Calu3 (cell line): ENCODE measurements at regions of chr15 and their contacts with region 1.

Region 1: DNA sequence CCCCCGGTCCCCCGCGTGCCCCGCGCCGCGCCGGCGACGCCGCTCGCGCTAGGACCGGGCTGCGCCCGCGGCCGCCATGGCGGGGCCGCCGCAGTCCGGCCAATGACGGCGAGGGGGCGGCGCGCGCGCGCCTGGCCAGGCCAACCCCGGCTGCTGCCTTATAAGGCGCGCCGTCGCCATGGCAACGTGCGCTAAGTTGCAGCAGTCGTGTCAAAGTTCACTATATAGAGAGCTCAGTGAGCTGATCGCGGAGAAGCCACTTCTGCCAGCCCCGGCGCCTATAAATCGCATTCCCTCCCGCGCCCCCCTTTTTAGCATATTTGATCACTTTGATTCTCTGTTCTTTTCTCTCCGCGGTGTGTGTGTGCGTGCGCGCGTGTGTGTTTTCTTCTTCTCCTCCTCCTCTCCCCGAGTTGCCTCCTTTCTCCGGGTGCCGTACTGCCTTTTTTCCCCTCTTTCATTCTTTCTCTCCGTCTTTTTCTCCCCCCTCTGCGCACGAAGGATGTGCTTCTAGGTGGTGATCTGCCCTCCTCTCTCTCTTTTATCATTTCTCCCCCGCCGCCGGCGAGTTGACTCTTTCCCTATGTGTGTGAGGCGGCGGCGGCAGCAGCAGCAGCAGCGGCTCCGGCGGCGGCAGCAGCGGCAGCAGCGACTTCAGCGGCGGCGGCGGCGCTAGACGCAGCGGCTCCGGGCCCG is at the start of gene NR2F2:
- DNase-seq: peak; percentile 98
- H3K4me3 Mint-ChIP-seq: no peak within 1 kb of the TSS
- H3K27ac Mint-ChIP-seq: peak within 1 kb of the TSS; percentile 98
- H3K4me1 Mint-ChIP-seq: peaks cover 22% of the 10 kb centered on the region
- H3K27me3 Mint-ChIP-seq: no peaks in the 10 kb centered on the region
- CTCF ChIP-seq: no peak
- total RNA-seq, gene NR2F2: 158 and 167 TPM in 2 replicates

Region 2: GRCh38 chr15:95259513-95259912 is 1071.1 kb before region 1 on chr15:
- CTCF ChIA-PET with region 1: interaction called, 4 read pairs
- intact Hi-C with region 1: loop called (anchors 5 kb)
- DNase-seq: peak; percentile 78
- H3K4me3 Mint-ChIP-seq: peak overlapping the region; percentile 15
- H3K27ac Mint-ChIP-seq: no peak overlapping the region
- H3K4me1 Mint-ChIP-seq: peaks cover 26% of the 10 kb centered on the region
- H3K27me3 Mint-ChIP-seq: no peaks in the 10 kb centered on the region
- CTCF ChIP-seq: peak; percentile 85

Region 3: GRCh38 chr15:95770191-95770590 is 560.4 kb before region 1 on chr15:
- CTCF ChIA-PET with region 1: no interaction called
- intact Hi-C with region 1: loop called (anchors 5 kb)
- DNase-seq: peak; percentile 69
- H3K4me3 Mint-ChIP-seq: peak overlapping the region; percentile 25
- H3K27ac Mint-ChIP-seq: peak overlapping the region; percentile 73
- H3K4me1 Mint-ChIP-seq: peaks cover 16% of the 10 kb centered on the region
- H3K27me3 Mint-ChIP-seq: no peaks in the 10 kb centered on the region
- CTCF ChIP-seq: no peak

Region 4: GRCh38 chr15:96218623-96219455 is 111.8 kb before region 1 on chr15:
- CTCF ChIA-PET with region 1: no interaction called
- intact Hi-C with region 1: no loop called
- DNase-seq: no peak
- H3K4me3 Mint-ChIP-seq: no peak overlapping the region
- H3K27ac Mint-ChIP-seq: no peak overlapping the region
- H3K4me1 Mint-ChIP-seq: peaks cover 23% of the 10 kb centered on the region
- H3K27me3 Mint-ChIP-seq: no peaks in the 10 kb centered on the region
- CTCF ChIP-seq: no peak

Region 5: DNA sequence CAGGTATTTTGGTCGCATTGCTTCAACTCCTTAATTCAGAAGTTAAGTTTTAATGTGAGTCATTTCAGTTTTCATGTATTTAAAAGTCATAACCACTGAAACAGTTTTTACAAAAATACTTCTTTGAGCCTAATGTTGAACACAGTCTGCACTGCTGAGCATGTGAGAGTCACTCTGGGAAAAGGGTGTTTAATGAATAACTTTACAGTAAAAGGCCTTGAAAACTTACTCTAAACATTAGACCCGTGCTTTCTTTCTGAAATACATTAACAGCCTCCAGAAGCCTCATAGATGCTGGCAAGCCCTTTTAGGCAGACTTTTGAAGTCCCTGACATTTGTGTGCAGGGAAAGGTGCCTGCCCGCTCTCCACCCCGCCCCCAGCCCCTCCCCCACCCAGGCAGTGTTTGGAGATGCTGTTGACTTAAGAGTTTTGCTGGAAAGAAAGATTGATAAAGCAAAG is 69.0 kb before region 1 on chr15:
- CTCF ChIA-PET with region 1: interaction called, 3 read pairs
- intact Hi-C with region 1: loop called (anchors 2 kb)
- DNase-seq: no peak
- H3K4me3 Mint-ChIP-seq: no peak overlapping the region
- H3K27ac Mint-ChIP-seq: peak overlapping the region; percentile 99
- H3K4me1 Mint-ChIP-seq: peaks cover 69% of the 10 kb centered on the region
- H3K27me3 Mint-ChIP-seq: no peaks in the 10 kb centered on the region
- CTCF ChIP-seq: no peak

Region 6: DNA sequence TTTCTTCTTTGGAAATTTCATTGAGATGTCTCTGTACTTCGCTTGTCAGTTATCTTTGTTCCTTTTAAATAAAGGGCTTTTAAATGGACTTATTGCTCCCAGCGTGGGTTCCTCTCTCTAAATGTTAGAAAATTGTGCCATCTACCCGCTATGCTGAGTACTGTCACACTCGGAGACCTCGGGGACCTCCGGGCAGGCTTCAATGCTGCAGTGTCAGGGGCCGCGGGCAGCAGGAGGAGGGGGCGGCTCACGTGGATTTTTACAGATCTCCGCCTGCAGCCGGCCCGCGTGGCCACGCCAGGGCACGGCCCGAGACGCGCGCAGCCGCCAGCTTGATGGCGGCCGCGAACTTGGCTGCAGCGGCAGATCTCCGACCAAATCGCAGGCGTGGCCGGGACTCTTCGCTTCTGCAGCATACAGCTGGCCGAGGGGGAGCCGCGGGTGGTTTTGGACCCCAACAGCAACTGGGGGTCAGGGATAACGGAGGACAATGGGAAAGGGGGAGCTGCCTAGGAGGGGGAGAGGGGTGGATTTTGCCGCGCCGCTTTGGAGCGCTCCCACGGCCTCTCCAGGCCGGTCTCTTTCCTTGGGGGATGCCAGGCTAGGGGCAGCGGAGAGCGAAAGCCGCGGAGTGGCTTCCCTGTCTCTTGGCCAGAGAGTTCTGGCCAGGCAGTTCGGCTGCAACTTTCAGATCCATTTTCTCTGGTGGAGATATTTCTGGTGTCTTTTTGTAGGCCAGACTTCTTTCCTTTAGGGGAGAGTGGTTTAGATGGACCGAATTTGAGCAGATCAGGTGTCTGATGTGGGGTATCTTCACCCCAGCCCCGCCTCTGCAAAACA is 15.2 kb after region 1 on chr15:
- CTCF ChIA-PET with region 1: interaction called, 121 read pairs
- intact Hi-C with region 1: loop called (anchors 2 kb)
- DNase-seq: peak; percentile 80
- H3K4me3 Mint-ChIP-seq: no peak overlapping the region
- H3K27ac Mint-ChIP-seq: no peak overlapping the region
- H3K4me1 Mint-ChIP-seq: peaks cover 70% of the 10 kb centered on the region
- H3K27me3 Mint-ChIP-seq: no peaks in the 10 kb centered on the region
- CTCF ChIP-seq: peak; percentile 66

Region 7: DNA sequence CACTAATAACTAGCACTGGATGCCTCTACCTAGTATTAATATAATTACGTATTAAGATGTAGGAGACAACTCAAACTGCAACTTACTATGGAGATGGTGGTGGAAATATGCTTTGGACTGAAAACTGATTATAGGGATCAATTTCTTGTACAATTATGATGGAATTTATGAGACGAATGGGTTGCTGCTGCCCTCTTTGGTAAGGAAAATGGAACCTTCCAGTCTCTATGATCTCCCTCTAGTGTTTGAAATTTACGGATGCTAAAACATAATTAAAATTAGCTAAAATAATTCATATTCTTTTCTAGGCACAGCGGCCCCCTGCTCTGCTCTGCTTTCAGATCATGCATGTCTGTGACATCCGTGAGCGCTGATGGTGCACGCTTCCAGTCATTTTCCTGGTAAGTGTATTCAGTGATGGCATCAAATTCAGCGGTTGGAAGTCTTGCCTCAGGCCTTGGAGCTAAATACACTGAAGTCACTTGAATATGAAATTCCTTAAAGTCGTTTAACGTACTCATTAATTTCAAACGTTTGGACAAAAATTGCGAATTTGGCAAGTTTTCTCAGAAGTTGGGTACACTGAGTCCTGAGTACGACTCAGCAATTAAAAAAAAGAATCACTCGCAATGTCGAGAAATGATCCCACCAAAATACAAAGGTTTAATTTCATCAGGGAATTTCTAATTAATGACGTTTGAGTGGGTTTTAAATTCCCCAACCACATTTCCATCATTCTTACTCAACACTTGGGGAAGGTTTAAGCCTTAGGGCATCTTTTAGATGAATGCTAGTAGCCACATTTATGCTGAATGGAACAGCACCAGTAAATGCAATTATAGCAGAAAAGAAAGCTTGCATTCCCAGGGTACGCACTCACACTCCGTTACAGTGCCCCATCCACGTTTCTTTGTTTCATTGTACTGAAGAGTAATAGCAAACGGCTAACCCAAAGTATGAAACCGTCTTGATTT is 132.5 kb after region 1 on chr15:
- CTCF ChIA-PET with region 1: no interaction called
- intact Hi-C with region 1: no loop called
- DNase-seq: no peak
- H3K4me3 Mint-ChIP-seq: no peak overlapping the region
- H3K27ac Mint-ChIP-seq: no peak overlapping the region
- H3K4me1 Mint-ChIP-seq: peaks cover 11% of the 10 kb centered on the region
- H3K27me3 Mint-ChIP-seq: no peaks in the 10 kb centered on the region
- CTCF ChIP-seq: peak; percentile 28

Region 8: DNA sequence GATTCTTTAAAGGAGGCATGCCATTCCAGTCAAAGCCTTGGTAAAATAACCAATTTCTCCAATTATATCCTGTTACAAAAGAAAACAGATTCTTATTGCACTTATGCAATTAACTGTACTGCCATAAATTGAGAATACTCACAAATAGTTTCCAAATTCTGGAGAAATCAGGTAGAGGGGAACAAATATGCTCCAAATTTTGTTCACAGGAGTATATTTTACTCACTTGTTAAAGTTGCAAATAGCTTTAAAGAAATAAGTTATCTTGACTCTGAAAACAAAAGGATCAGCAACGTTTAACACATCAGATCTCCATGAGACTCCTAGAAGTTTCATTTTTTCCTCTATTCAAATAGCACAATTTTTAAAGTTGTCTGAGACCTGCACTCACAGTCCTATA is 917.8 kb after region 1 on chr15:
- CTCF ChIA-PET with region 1: interaction called, 17 read pairs
- intact Hi-C with region 1: no loop called
- DNase-seq: no peak
- H3K4me3 Mint-ChIP-seq: no peak overlapping the region
- H3K27ac Mint-ChIP-seq: no peak overlapping the region
- H3K4me1 Mint-ChIP-seq: peaks cover 11% of the 10 kb centered on the region
- H3K27me3 Mint-ChIP-seq: no peaks in the 10 kb centered on the region
- CTCF ChIP-seq: no peak